Body of pancreas (tissue), 4 donors: ENCODE measurements at regions of chr1 and their contacts with region 1.

Region 1: DNA sequence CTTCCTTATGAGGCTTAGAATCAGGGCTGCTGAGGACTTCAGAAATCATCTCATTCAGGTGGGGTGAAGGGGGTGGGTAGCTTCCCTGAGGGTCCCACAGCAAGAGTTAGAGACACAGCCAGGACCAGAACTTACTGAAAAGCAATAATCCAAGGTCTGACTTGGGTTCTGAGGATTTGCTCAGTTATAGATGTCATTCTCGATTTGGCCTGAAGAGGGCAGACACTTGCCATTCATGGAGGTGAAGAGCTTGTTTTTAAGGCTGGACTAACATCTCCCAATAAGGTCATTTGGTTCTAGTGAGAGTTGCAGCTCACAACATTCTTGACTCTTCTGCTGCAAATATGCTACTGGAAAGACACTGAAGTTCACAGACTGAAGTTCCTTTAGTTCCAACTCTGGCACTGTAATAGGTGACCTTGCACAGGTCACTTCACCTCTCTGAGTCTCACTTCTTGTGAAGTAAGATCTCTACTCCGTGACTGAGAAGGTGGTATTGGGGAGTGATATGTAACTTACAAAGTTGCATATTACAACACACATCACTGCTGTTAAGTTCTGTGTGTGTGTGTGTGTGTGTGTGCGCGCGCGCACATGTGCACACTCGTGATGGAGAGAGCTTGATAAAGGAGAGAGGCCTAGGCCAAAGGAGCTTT is 69.8 kb upstream of the DIRAS3 start:
- DNase-seq: peak; percentile 42 to 71 (median 56)
- ATAC-seq: peak; percentile 80
- H3K4me3 ChIP-seq: no peak overlapping the region
- H3K27ac ChIP-seq: no peak overlapping the region
- H3K4me1 ChIP-seq: peaks cover 4% of the 10 kb centered on the region
- H3K27me3 ChIP-seq: no peaks in the 10 kb centered on the region
- CTCF ChIP-seq: peak in 6 of 7 experiments; percentile 68 to 91 (median 86)
- POLR2A ChIP-seq: peak in 1 of 3 donors; percentile 5

Region 2: DNA sequence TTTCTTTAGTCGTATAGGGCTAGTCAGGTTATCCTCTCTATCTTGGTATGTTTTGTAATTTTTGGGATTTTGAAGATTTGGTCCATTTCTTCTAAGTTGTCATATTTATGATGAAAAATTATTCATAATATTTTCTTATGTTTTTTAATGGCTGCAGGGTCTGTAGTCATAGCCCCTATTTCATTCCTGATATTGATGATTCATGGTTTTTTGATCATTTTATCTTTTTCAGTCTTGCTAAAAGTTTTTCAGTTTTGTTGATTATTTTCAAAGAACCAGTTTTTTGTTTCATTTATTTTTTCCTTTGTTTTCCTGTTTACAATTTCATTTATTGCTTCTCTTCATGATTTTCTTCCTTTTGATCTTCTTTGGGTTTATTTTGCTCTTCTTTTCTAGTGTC is 120.1 kb before region 1 on chr1:
- intact Hi-C with region 1: no loop called
- DNase-seq: no peak
- ATAC-seq: no peak
- H3K4me3 ChIP-seq: no peak overlapping the region
- H3K27ac ChIP-seq: no peak overlapping the region
- H3K4me1 ChIP-seq: no peaks in the 10 kb centered on the region
- H3K27me3 ChIP-seq: no peaks in the 10 kb centered on the region
- CTCF ChIP-seq: no peak
- POLR2A ChIP-seq: no peak

Region 3: DNA sequence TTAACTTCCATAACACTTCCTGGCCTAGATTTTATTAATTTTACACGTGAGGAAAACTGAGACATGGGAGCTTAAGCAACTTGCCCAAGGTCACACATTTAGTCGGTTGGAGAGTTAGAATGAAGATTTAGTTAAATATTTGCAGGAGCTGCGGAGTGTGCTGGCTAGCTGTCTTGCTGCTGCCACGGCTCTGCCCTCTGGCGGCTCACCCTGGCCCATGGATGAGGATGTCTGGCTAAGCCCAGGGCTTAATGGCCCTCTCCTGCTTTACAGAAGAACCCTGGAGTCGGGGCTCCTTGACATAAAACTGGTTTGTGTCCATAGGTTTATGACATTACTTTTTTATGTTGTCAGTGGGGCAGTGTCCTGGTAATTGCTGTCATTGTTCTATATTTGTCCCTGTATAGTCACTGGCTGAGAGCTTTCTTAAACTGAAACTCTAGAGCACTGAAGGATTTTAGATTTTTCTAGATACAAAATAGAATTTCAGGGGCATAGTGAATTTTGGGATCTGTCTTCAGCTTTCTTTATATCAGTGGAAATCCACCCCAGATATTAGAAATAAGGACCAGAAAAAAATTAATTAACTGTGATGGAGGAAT is 200.9 kb after region 1 on chr1:
- intact Hi-C with region 1: loop called (anchors 5 kb)
- DNase-seq: peak; percentile 87 to 92 (median 89)
- ATAC-seq: peak; percentile 100
- H3K4me3 ChIP-seq: no peak overlapping the region
- H3K27ac ChIP-seq: peak overlapping the region in 1 of 4 donors; percentile 52
- H3K4me1 ChIP-seq: peaks cover 8% of the 10 kb centered on the region
- H3K27me3 ChIP-seq: no peaks in the 10 kb centered on the region
- CTCF ChIP-seq: peak; percentile 59 to 93 (median 87)
- POLR2A ChIP-seq: no peak